Transverse colon (tissue), 4 donors: ENCODE measurements at regions of chr11 and their contacts with region 1.

Region 1: DNA sequence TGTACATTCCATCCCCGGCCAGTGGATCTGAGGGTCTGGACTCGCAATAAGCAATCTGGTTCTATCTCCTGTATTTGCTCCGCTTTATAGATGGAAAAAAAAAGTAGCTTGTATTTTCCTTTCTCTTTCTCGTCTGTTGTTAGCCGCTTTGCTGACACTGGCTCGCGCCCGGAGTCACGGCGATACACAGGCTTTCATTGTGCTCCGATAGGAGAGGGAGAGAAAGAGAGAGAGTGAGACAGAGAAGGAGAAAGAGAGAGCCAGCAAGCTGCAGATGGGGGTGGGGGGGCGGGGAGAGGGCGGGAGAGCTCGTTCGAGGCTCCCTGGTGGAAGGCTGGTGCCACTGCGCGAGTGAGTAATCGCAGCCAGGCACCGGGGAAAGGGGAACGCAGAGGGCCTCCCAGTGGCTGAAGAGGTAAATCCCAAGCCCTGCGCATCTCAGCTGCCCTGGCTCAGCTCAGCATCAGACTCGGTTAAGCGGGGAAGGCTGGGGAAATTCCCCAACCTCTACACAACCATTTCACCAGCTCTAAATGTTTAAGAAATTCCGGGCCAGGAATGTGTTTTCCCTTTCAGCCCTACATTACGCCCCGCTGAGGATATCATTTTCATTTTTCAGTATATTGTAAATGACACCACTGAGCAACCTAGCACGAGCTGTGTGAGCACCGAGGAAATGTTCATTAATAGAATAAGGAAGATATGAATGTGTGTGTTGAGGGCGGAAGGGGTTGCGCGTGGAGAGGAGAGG is at the start of gene MAML2:
- DNase-seq: peak; percentile 95
- H3K4me3 ChIP-seq: peak within 1 kb of the TSS; percentile 53 to 90 (median 64)
- H3K27ac ChIP-seq: peak within 1 kb of the TSS; percentile 82 to 89 (median 86)
- H3K4me1 ChIP-seq: peaks cover 15 to 39% (median 37%) of the 10 kb centered on the region in 4 donors
- H3K27me3 ChIP-seq: no peaks in the 10 kb centered on the region
- CTCF ChIP-seq: peak; percentile 85 to 98 (median 92)
- EP300 ChIP-seq: no peak
- POLR2A ChIP-seq: no peak
- total RNA-seq, gene MAML2: 15.9 to 31.9 (median 24.9) TPM

Region 2: GRCh38 chr11:96054870-96055705 is 288.0 kb before region 1 on chr11:
- in situ Hi-C with region 1: loop called (anchors 5 to 25 kb)
- intact Hi-C with region 1: loop called (anchors 5 kb)
- DNase-seq: no peak
- H3K4me3 ChIP-seq: no peak overlapping the region
- H3K27ac ChIP-seq: peak overlapping the region in 1 of 4 donors; percentile 14
- H3K4me1 ChIP-seq: peaks cover 9 to 32% (median 13%) of the 10 kb centered on the region in 4 donors
- H3K27me3 ChIP-seq: no peaks in the 10 kb centered on the region
- CTCF ChIP-seq: peak; percentile 61 to 72 (median 67)
- EP300 ChIP-seq: no peak
- POLR2A ChIP-seq: no peak

Region 3: GRCh38 chr11:96242971-96243647 is 100.0 kb before region 1 on chr11:
- in situ Hi-C with region 1: loop called in 3 of 4 experiments (anchors 25 kb)
- intact Hi-C with region 1: loop called (anchors 10 kb)
- DNase-seq: peak; percentile 94
- H3K4me3 ChIP-seq: peak overlapping the region in 3 of 4 donors; percentile 37 to 54 (median 43)
- H3K27ac ChIP-seq: peak overlapping the region; percentile 85 to 93 (median 92)
- H3K4me1 ChIP-seq: peaks cover 20 to 48% (median 34%) of the 10 kb centered on the region in 4 donors
- H3K27me3 ChIP-seq: no peaks in the 10 kb centered on the region
- CTCF ChIP-seq: no peak
- EP300 ChIP-seq: no peak
- POLR2A ChIP-seq: peak; percentile 75